ENCODE measurements at regions of chr11 and their contacts with region 1.

Region 1: DNA sequence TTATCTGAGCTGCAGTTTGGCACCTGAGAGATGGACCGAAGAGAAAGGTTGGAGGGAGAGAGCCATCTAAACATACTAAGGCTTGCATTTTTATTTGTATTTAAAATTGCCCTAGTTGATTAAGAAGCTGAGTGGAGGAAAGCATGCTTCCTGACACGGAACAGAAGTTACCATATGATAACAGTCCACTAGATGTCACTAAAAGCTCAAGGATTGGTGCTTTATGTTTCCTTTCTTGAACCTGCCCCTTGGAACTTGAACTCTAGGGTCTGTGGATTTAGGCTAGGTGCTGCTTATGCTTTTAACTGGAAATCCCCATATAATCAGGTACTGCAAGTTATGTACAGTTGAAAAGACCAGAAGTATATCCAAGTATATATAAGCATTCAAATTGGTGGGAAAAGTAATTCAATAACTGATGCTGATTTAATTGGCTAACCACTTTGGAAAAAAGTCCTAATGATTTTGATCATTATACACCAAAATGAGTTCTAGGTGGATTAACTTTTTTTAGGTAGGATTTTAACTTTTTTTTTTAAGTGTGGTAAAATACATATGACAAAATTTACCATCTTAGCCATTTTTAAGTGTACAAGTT is 9.5 kb downstream of the RBMXL2 start:
- DNase-seq: peak; percentile 76
- H3K4me3 ChIP-seq: no peak overlapping the region
- H3K27ac ChIP-seq: no peak overlapping the region
- H3K4me1 ChIP-seq: no peaks in the 10 kb centered on the region
- CTCF ChIP-seq: peak; percentile 88

Region 2: GRCh38 chr11:6693342-6694228 is 404.7 kb before region 1 on chr11:
- CTCF ChIA-PET with region 1: no interaction called
- POLR2A ChIA-PET with region 1: no interaction called
- intact Hi-C with region 1: no loop called
- DNase-seq: no peak
- H3K4me3 ChIP-seq: no peak overlapping the region
- H3K27ac ChIP-seq: no peak overlapping the region
- H3K4me1 ChIP-seq: no peaks in the 10 kb centered on the region
- CTCF ChIP-seq: no peak

Region 3: DNA sequence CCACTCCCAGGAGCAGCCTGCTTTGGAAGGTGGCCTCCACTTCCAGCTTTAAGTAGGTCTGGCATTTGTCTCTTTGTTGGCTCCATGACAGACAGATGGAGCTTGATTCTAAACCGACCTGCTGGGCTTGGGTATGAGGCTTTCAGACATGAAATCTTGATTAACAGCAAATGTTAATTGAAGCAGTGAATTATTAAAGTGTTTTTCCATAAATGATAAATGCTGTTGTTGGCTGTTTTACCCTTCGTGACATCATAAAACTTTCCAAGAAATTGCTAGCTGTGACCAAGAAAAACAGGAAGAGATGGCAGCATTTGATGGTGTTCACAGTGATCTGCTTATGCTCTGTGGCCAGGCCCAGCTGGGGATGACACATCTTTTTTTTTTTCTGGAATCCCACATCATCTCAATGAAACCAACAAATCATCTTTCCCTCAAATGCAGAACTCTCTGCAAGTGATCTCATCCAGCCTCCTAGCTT is 56.6 kb after region 1 on chr11:
- CTCF ChIA-PET with region 1: no interaction called
- POLR2A ChIA-PET with region 1: no interaction called
- intact Hi-C with region 1: no loop called
- DNase-seq: no peak
- H3K4me3 ChIP-seq: no peak overlapping the region
- H3K27ac ChIP-seq: no peak overlapping the region
- H3K4me1 ChIP-seq: no peaks in the 10 kb centered on the region
- CTCF ChIP-seq: no peak

Region 4: GRCh38 chr11:7353100-7353499 is 254.8 kb after region 1 on chr11:
- CTCF ChIA-PET with region 1: no interaction called
- POLR2A ChIA-PET with region 1: no interaction called
- intact Hi-C with region 1: loop called (anchors 10 kb)
- DNase-seq: peak; percentile 68
- H3K4me3 ChIP-seq: no peak overlapping the region
- H3K27ac ChIP-seq: no peak overlapping the region
- H3K4me1 ChIP-seq: no peaks in the 10 kb centered on the region
- CTCF ChIP-seq: peak; percentile 88

Region 5: GRCh38 chr11:7694235-7694634 is 595.9 kb after region 1 on chr11:
- CTCF ChIA-PET with region 1: no interaction called
- POLR2A ChIA-PET with region 1: no interaction called
- intact Hi-C with region 1: loop called (anchors 2 kb)
- DNase-seq: no peak
- H3K4me3 ChIP-seq: no peak overlapping the region
- H3K27ac ChIP-seq: no peak overlapping the region
- H3K4me1 ChIP-seq: no peaks in the 10 kb centered on the region
- CTCF ChIP-seq: no peak

Measured in OCI-LY7 (cell line).